ENCODE measurements at regions of chr10 and their contacts with region 1.

Region 1: GRCh38 chr10:34655286-34656170 is 159.6 kb downstream of the PARD3 start:
- DNase-seq: peak; percentile 46 to 50
- H3K4me3 ChIP-seq: no peak overlapping the region
- H3K27ac ChIP-seq: no peak overlapping the region
- H3K4me1 ChIP-seq: peaks cover 7% of the 10 kb centered on the region; the same call in 1 of the 2 replicates
- H3K27me3 ChIP-seq: no peaks in the 10 kb centered on the region
- CTCF ChIP-seq: peak; percentile 79

Region 2: DNA sequence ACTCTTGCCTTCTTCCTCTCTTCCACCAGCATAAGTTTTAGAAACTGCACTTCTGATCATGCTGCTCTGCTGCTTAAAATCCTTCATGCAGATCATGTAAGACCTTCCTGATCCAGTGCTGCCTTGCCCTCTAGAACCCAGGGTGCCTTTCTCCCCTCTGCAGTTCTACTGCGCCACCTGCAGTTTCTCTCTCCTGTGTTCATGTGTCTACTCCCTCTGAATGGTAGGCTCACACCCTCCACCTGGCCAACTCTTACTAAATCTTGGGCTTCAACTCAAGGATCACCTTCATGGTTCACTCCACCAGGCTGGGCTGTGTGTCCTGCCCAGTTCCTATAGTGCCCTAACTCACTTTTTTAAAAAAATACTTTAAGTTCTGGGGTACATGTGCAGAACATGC is 1522.9 kb before region 1 on chr10:
- CTCF ChIA-PET with region 1: no interaction called
- POLR2A ChIA-PET with region 1: no interaction called
- intact Hi-C with region 1: no loop called
- DNase-seq: no peak
- H3K4me3 ChIP-seq: no peak overlapping the region
- H3K27ac ChIP-seq: peak overlapping the region; percentile 95; the same call in 1 of the 2 replicates
- H3K4me1 ChIP-seq: peaks cover 40% of the 10 kb centered on the region
- H3K27me3 ChIP-seq: no peaks in the 10 kb centered on the region
- CTCF ChIP-seq: no peak

Region 3: GRCh38 chr10:35027567-35027966 is 372.0 kb after region 1 on chr10:
- CTCF ChIA-PET with region 1: no interaction called
- POLR2A ChIA-PET with region 1: no interaction called
- intact Hi-C with region 1: loop called (anchors 5 kb)
- DNase-seq: no peak
- H3K4me3 ChIP-seq: no peak overlapping the region
- H3K27ac ChIP-seq: no peak overlapping the region
- H3K4me1 ChIP-seq: no peaks in the 10 kb centered on the region
- H3K27me3 ChIP-seq: no peaks in the 10 kb centered on the region
- CTCF ChIP-seq: peak; percentile 63